Adrenal gland (tissue), 19 donors: ENCODE measurements at regions of chr19 and their contacts with region 1.

Region 1: GRCh38 chr19:41308392-41309179 is 1.4 kb upstream of the CCDC97 start:
- DNase-seq: peak; percentile 91 to 98 (median 95)
- H3K4me3 ChIP-seq: peak overlapping the region in 1 of 4 donors; percentile 84
- H3K27ac ChIP-seq: peak overlapping the region; percentile 91 to 99 (median 96)
- H3K4me1 ChIP-seq: peaks cover 21 to 37% of the 10 kb centered on the region in 2 donors
- H3K27me3 ChIP-seq: no peaks in the 10 kb centered on the region
- CTCF ChIP-seq: peak; percentile 97 to 98 (median 98)
- POLR2A ChIP-seq: no peak

Region 2: DNA sequence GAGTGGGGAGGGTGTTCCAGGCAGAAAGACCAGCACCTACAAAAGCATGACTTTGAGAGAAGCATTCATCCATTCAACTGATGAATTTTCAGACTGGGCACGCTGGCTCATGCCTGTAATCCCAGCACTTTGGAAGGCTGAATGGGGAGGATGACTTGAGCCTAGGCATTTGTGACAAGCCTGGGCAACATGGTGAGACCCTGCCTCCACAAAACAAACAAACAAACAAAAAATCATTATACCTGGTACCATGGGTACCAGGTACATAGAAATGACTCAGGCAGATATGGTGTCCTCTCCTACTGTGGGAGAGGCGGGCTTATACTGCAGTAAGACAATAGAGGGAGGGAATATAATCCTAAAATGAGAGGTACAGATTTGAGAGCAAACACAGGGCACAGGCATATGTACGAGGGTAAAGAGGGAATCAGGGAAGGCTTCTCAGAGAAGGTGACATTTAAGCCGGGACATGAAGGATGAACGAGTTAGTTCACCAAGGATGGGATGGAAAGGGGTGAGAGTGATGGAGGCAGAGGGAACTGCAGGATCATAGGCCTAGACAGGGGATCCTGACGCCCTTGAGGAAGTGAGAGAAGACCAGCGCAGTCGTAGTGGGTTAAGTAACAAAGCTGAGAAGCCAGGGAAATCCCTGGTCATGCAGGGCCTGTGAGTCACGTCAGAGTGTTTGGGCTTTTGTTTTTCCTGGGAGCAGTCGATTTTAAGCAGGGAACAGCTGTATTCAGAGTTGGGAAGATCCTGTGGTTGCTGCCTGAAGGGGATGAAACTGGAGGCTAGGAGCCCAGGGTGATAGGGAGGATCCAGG is 112.7 kb before region 1 on chr19:
- intact Hi-C with region 1: loop called in 1 of 2 experiments (anchors 5 kb)
- DNase-seq: no peak
- H3K4me3 ChIP-seq: no peak overlapping the region
- H3K27ac ChIP-seq: no peak overlapping the region
- H3K4me1 ChIP-seq: peaks cover 0 to 10% of the 10 kb centered on the region in 2 donors
- H3K27me3 ChIP-seq: peaks cover 6% of the 10 kb centered on the region
- CTCF ChIP-seq: no peak
- POLR2A ChIP-seq: no peak